A673 (cell line): ENCODE measurements at regions of chr18 and their contacts with region 1.

Region 1: GRCh38 chr18:37537868-37538525 is 27.6 kb downstream of the CELF4 start:
- DNase-seq: peak; percentile 64
- H3K4me3 ChIP-seq: no peak overlapping the region
- H3K27ac ChIP-seq: no peak overlapping the region
- H3K4me1 ChIP-seq: no peaks in the 10 kb centered on the region
- H3K27me3 ChIP-seq: peaks cover 100% of the 10 kb centered on the region
- CTCF ChIP-seq: peak; percentile 90

Region 2: GRCh38 chr18:36942264-36942663 is 595.7 kb before region 1 on chr18:
- CTCF ChIA-PET with region 1: no interaction called
- POLR2A ChIA-PET with region 1: no interaction called
- intact Hi-C with region 1: loop called (anchors 5 kb)
- DNase-seq: peak; percentile 56
- H3K4me3 ChIP-seq: no peak overlapping the region
- H3K27ac ChIP-seq: no peak overlapping the region
- H3K4me1 ChIP-seq: no peaks in the 10 kb centered on the region
- H3K27me3 ChIP-seq: no peaks in the 10 kb centered on the region
- CTCF ChIP-seq: peak; percentile 72

Region 3: DNA sequence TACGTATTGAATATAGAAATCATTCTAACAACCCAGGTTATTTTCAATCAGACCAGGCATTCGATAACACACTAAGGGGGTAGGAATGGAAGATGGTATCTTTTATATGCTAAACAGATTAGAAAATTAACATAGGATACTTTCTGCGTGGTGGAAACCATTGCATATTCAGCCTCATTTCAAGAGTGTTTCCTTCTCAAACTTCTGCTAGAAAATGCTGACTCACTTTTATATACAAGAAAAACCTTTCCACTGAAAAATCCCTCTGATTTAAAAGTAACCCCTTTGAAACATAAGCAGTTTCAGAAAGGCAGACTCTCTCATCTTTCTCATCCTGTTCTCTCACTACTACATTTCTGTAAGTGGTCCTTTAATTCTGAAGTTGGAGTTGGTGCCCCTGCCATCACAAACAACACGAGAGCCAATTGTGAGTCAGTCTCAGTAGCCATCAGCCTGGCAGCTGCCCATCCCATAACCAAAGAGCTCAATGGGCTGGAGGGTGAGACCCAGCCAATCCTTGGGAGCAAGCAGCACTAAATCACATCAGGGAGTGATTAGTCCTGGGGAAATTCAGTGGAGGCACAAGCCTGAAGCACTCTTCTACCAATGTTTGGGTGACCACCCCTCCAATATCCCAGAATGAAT is 315.5 kb before region 1 on chr18:
- CTCF ChIA-PET with region 1: no interaction called
- POLR2A ChIA-PET with region 1: no interaction called
- intact Hi-C with region 1: no loop called
- DNase-seq: no peak
- H3K4me3 ChIP-seq: no peak overlapping the region
- H3K27ac ChIP-seq: no peak overlapping the region
- H3K4me1 ChIP-seq: no peaks in the 10 kb centered on the region
- H3K27me3 ChIP-seq: no peaks in the 10 kb centered on the region
- CTCF ChIP-seq: no peak

Region 4: DNA sequence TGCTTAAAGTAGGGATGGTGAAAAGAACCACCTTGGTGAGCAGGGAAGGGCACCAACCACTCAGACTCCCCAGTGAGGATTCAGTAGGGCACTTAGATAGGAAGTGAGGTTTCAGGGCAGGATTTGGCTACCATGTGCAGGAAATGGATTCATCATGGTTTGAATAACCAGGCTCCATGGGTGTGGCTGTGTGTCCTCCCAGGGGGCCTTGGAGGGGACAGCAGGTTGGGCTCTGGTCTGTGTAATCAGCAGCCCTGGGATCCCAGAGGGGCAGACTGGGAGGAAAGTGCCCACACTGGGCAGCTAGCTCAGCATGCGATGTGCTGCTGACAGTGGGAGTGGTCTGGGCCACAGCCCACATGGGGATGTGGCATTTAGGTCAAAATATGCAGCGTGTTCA is 197.0 kb before region 1 on chr18:
- CTCF ChIA-PET with region 1: no interaction called
- POLR2A ChIA-PET with region 1: no interaction called
- intact Hi-C with region 1: loop called (anchors 5 kb)
- DNase-seq: peak; percentile 61
- H3K4me3 ChIP-seq: no peak overlapping the region
- H3K27ac ChIP-seq: no peak overlapping the region
- H3K4me1 ChIP-seq: no peaks in the 10 kb centered on the region
- H3K27me3 ChIP-seq: no peaks in the 10 kb centered on the region
- CTCF ChIP-seq: no peak

Region 5: GRCh38 chr18:37385846-37386778 is 151.9 kb before region 1 on chr18:
- CTCF ChIA-PET with region 1: no interaction called
- POLR2A ChIA-PET with region 1: interaction called, 8 read pairs
- intact Hi-C with region 1: loop called (anchors 5 kb)
- DNase-seq: peak; percentile 34
- H3K4me3 ChIP-seq: no peak overlapping the region
- H3K27ac ChIP-seq: no peak overlapping the region
- H3K4me1 ChIP-seq: peaks cover 5% of the 10 kb centered on the region
- H3K27me3 ChIP-seq: peaks cover 5% of the 10 kb centered on the region
- CTCF ChIP-seq: peak; percentile 73

Region 6: DNA sequence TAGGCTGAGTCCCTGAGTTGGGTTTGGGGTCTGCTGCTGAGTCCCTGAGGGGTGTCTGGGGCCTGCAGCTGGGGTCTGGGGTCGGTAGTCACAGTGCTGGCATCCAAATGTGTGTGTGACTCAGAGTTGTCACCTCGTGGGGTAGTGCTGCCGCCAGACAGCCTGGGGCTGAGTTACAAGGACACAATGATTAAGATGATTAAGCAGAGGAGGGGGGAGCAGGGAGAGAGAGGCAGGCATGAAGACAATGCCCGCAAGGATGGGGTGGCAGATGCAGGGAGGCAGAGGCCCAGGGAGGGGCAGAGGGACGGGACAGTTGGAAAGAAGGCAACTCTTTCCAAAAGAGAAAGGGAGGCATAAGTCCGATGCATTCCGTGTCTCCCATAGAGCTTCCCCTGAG is 92.6 kb before region 1 on chr18:
- CTCF ChIA-PET with region 1: no interaction called
- POLR2A ChIA-PET with region 1: no interaction called
- intact Hi-C with region 1: loop called (anchors 10 kb)
- DNase-seq: no peak
- H3K4me3 ChIP-seq: no peak overlapping the region
- H3K27ac ChIP-seq: no peak overlapping the region
- H3K4me1 ChIP-seq: no peaks in the 10 kb centered on the region
- H3K27me3 ChIP-seq: peaks cover 12% of the 10 kb centered on the region
- CTCF ChIP-seq: no peak